Naive thymus-derived CD4-positive, alpha-beta T cell (primary cell): ENCODE measurements at regions of chr15 and their contacts with region 1.

Region 1: GRCh38 chr15:81265944-81266775 is 57.8 kb downstream of the STARD5 start:
- DNase-seq: peak; percentile 60 to 81 (median 75)
- ATAC-seq: peak; percentile 92
- H3K4me3 ChIP-seq: peak overlapping the region; percentile 50
- H3K4me3 Mint-ChIP-seq: peak overlapping the region; percentile 75 to 89 (median 81)
- H3K27ac ChIP-seq: no peak overlapping the region
- H3K27ac Mint-ChIP-seq: peak overlapping the region in 5 of 9 donors; percentile 9 to 86 (median 48)
- H3K4me1 ChIP-seq: peaks cover 9 to 25% of the 10 kb centered on the region in 2 donors
- H3K4me1 Mint-ChIP-seq: peaks cover 21 to 43% (median 35%) of the 10 kb centered on the region in 7 donors
- H3K27me3 ChIP-seq: no peaks in the 10 kb centered on the region
- H3K27me3 Mint-ChIP-seq: peaks cover 0 to 13% (median 5%) of the 10 kb centered on the region in 5 donors

Region 2: GRCh38 chr15:80567721-80568157 is 698.4 kb before region 1 on chr15:
- CTCF ChIA-PET with region 1: interaction called, 6 read pairs
- POLR2A ChIA-PET with region 1: no interaction called
- intact Hi-C with region 1: loop called in 1 of 2 experiments (anchors 10 kb)
- DNase-seq: peak in 4 of 9 donors; percentile 6 to 19 (median 14)
- ATAC-seq: no peak
- H3K4me3 ChIP-seq: no peak overlapping the region
- H3K4me3 Mint-ChIP-seq: no peak overlapping the region
- H3K27ac ChIP-seq: no peak overlapping the region
- H3K27ac Mint-ChIP-seq: no peak overlapping the region
- H3K4me1 ChIP-seq: no peaks in the 10 kb centered on the region
- H3K4me1 Mint-ChIP-seq: no peaks in the 10 kb centered on the region
- H3K27me3 ChIP-seq: no peaks in the 10 kb centered on the region
- H3K27me3 Mint-ChIP-seq: peaks cover 6 to 37% (median 16%) of the 10 kb centered on the region in 5 donors

Region 3: DNA sequence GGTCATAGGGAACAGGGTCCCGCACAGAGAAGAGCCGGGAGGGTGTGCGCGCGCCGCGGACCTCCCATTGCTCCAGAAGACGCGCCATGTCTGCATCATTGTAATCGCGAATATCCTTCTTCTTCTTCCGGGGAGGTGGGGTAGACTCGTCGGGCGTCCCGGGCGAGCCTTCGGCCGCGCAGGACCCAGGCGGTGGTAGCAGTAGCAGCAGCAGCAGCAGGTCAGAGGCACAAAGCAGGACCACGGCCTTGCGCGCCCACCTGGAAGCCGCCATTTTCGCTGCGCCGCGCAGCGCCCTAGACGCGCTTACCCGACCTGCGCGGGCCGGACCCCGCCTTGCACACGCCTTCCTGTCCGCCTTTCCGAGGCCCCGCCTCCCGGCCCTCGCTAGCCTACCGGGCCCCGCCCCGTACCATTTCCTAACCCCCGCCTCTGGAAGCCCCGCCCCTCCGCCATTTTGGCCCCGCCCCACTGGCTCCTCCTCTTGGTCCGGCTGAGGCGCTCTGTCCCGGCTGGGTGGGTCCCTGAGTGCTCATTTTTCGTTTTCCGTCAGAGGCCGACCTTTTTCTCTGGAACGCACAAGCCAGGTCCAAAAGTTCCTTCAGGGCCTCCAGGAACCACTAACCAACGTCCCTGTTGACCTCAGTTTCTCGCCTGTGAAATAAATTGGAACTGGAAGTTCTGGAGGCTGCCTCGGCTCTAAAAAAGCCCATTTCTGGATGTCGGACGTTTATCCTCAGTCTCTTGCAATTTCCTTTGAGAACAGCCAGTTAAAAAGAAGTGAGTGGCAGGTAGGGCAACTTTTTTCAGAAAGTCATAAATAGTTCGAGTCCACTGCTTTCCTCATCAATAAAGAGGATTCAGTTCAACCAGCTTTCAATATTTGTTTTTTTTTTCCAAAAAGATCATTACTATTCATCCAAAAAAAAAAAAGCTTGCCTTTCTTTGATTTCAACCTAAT is 276.4 kb before region 1 on chr15 and contains the start of gene MESD:
- CTCF ChIA-PET with region 1: interaction called, 13 read pairs
- POLR2A ChIA-PET with region 1: interaction called, 3 read pairs
- intact Hi-C with region 1: loop called in 1 of 2 experiments (anchors 2 kb)
- DNase-seq: peak; percentile 89 to 97 (median 93)
- ATAC-seq: peak; percentile 99
- H3K4me3 ChIP-seq: peak within 1 kb of the TSS; percentile 95
- H3K4me3 Mint-ChIP-seq: peak within 1 kb of the TSS; percentile 95 to 100 (median 98)
- H3K27ac ChIP-seq: peak within 1 kb of the TSS; percentile 90
- H3K27ac Mint-ChIP-seq: peak within 1 kb of the TSS; percentile 92 to 99 (median 99)
- H3K4me1 ChIP-seq: peaks cover 28 to 45% of the 10 kb centered on the region in 2 donors
- H3K4me1 Mint-ChIP-seq: peaks cover 37 to 68% (median 64%) of the 10 kb centered on the region in 7 donors
- H3K27me3 ChIP-seq: no peaks in the 10 kb centered on the region
- H3K27me3 Mint-ChIP-seq: no peaks in the 10 kb centered on the region
- total RNA-seq, gene MESD: 17.1 to 42.5 (median 38.3) TPM

Region 4: GRCh38 chr15:81155375-81156218 is 110.6 kb before region 1 on chr15:
- CTCF ChIA-PET with region 1: interaction called, 72 read pairs
- POLR2A ChIA-PET with region 1: interaction called, 6 read pairs
- intact Hi-C with region 1: loop called (anchors 1 kb)
- DNase-seq: peak in 6 of 9 donors; percentile 12 to 44 (median 32)
- ATAC-seq: no peak
- H3K4me3 ChIP-seq: no peak overlapping the region
- H3K4me3 Mint-ChIP-seq: no peak overlapping the region
- H3K27ac ChIP-seq: no peak overlapping the region
- H3K27ac Mint-ChIP-seq: peak overlapping the region in 1 of 9 donors; percentile 2
- H3K4me1 ChIP-seq: no peaks in the 10 kb centered on the region
- H3K4me1 Mint-ChIP-seq: peaks cover under 1 to 19% (median 5%) of the 10 kb centered on the region in 7 donors
- H3K27me3 ChIP-seq: no peaks in the 10 kb centered on the region
- H3K27me3 Mint-ChIP-seq: peaks cover 0 to 13% (median under 1%) of the 10 kb centered on the region in 5 donors

Region 5: GRCh38 chr15:81336568-81336967 is 70.4 kb after region 1 on chr15:
- CTCF ChIA-PET with region 1: interaction called, 22 read pairs
- POLR2A ChIA-PET with region 1: no interaction called
- intact Hi-C with region 1: loop called in 1 of 2 experiments (anchors 2 kb)
- DNase-seq: peak in 6 of 9 donors; percentile 32 to 49 (median 37)
- ATAC-seq: peak; percentile 70
- H3K4me3 ChIP-seq: no peak overlapping the region
- H3K4me3 Mint-ChIP-seq: no peak overlapping the region
- H3K27ac ChIP-seq: no peak overlapping the region
- H3K27ac Mint-ChIP-seq: peak overlapping the region in 4 of 9 donors; percentile 3 to 68 (median 17)
- H3K4me1 ChIP-seq: peaks cover 0 to 3% of the 10 kb centered on the region in 2 donors
- H3K4me1 Mint-ChIP-seq: peaks cover 4 to 22% (median 12%) of the 10 kb centered on the region in 7 donors
- H3K27me3 ChIP-seq: no peaks in the 10 kb centered on the region
- H3K27me3 Mint-ChIP-seq: peaks cover 0 to 9% (median 0%) of the 10 kb centered on the region in 5 donors